Activated T-helper 1 cell treated with anti-CD3 and anti-CD28 coated beads, Interleukin-12 subunit alpha, Interleukin-12 subunit beta, Interleukin-2, Interleukin-4 antibody, amounts not matched to agents 30 ng/mL and 10 ng/mL and 1 ng/mL, durations not matched to agents 14 hours and 24 hours and 36 hours (primary cell): ENCODE measurements at regions of chr18 and their contacts with region 1.

Region 1: GRCh38 chr18:63161761-63162195 is 157.8 kb downstream of the BCL2 start:
- DNase-seq: peak; percentile 80
- H3K4me3 Mint-ChIP-seq: peak overlapping the region; percentile 83
- H3K27ac Mint-ChIP-seq: peak overlapping the region; percentile 99
- H3K4me1 Mint-ChIP-seq: peaks cover 92% of the 10 kb centered on the region
- H3K27me3 Mint-ChIP-seq: no peaks in the 10 kb centered on the region

Region 2: DNA sequence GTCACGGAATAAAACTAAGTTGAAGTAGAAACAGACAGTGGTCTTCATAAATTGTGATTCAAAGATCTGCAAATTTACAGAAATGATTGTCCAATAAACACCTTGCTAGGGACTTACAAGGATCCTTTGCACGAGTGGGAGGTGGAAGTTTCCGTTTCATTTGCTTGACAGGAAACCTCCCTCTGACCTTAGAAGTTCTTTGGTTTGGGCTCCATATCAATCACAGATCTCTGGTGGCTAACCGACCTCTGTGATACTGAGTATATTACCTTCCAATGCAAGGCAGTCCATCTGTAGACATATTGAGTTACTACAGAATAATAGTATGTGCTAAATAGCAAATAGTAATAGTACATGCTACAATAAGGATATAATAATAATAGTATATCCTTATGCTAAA is 1235.2 kb before region 1 on chr18:
- intact Hi-C with region 1: loop called (anchors 5 kb)
- DNase-seq: peak; percentile 26
- H3K4me3 Mint-ChIP-seq: peak overlapping the region; percentile 63
- H3K27ac Mint-ChIP-seq: peak overlapping the region; percentile 74
- H3K4me1 Mint-ChIP-seq: peaks cover 40% of the 10 kb centered on the region
- H3K27me3 Mint-ChIP-seq: peaks cover 12% of the 10 kb centered on the region

Region 3: GRCh38 chr18:63138436-63139340 is 23.1 kb before region 1 on chr18:
- intact Hi-C with region 1: loop called (anchors 1 kb)
- DNase-seq: no peak
- H3K4me3 Mint-ChIP-seq: peak overlapping the region; percentile 73
- H3K27ac Mint-ChIP-seq: peak overlapping the region; percentile 90
- H3K4me1 Mint-ChIP-seq: peaks cover 71% of the 10 kb centered on the region
- H3K27me3 Mint-ChIP-seq: no peaks in the 10 kb centered on the region

Region 4: DNA sequence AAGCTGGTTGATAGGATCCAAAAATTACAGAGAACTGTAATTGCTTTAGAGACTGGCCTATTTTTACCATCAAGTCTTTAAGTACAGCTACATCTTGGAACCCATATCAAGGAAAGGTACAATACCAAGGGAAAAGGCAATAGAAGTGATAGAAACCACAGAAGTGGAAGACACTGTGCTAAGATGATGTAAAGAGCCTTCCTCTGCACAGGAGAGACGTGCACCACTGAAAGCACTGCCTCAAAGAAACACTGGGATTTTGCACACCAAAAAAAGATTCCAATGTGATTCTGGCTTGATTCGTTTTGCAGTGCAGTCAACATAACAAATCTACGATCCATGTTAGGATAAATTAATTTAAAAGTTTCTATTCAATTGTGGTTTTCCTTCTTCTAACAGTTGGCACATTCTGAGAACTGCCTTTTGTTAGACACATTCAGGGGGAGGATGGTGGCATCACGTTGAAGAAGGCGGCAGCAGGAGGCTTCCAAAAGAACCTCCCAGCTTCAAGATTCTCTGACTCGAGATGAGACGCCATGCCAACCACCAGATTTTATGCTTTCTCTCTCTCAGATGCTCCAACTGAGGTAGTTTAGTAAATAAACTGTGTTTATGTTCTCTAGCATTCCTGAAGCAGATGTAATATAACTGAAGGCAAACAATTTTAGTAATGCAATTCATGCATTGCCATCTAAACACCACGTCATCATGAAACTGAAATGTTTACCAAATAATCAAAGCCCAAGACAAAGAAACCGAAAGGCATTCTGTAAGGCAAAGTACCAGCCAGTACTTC is 54.9 kb after region 1 on chr18:
- intact Hi-C with region 1: loop called (anchors 1 kb)
- DNase-seq: no peak
- H3K4me3 Mint-ChIP-seq: peak overlapping the region; percentile 67
- H3K27ac Mint-ChIP-seq: peak overlapping the region; percentile 89
- H3K4me1 Mint-ChIP-seq: peaks cover 94% of the 10 kb centered on the region
- H3K27me3 Mint-ChIP-seq: no peaks in the 10 kb centered on the region

Region 5: DNA sequence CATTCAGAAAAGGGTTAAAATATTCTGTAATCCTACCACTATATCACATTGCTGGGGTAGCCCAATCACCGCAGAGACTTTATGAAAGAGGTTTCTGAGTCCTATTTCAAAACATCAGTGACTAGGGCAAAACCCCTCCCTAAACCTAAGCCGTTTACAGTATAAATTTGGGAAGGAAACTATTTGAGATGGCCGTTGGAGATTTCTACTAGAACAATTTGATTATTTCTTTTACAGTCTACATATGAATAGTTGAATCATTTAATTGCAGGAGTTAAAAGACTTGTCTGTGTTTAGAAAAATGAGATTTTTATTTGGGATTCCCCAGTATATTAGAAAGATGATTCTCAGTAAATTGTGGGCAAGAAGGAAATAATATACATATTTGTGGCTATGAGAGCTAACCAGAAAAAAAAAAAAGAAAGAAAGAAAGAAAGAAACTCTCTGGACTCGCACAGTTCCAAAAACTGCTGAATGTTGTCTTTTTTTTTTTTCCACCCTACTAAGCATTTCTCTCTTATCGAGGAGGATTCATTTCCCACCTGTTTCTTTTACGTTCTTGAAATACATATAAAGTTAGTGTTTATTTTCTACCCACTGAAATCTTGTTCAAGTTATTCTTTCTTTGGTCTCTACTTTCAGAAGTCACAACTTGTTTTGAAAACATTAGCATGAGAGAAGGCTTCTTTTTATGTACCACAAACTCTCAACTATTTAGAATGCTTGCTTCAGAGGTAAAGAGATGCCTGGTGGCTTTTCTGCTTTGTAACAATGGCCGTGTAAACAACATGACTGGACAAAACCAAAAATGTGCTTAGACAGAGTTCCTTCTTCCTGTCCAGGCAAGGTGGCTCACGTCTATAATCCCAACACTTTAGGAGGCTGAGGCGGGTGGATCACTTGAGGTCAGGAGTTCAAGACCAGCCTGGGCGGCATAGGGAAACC is 91.9 kb after region 1 on chr18:
- intact Hi-C with region 1: loop called (anchors 1 kb)
- DNase-seq: no peak
- H3K4me3 Mint-ChIP-seq: no peak overlapping the region
- H3K27ac Mint-ChIP-seq: peak overlapping the region; percentile 79
- H3K4me1 Mint-ChIP-seq: peaks cover 78% of the 10 kb centered on the region
- H3K27me3 Mint-ChIP-seq: no peaks in the 10 kb centered on the region

Region 6: DNA sequence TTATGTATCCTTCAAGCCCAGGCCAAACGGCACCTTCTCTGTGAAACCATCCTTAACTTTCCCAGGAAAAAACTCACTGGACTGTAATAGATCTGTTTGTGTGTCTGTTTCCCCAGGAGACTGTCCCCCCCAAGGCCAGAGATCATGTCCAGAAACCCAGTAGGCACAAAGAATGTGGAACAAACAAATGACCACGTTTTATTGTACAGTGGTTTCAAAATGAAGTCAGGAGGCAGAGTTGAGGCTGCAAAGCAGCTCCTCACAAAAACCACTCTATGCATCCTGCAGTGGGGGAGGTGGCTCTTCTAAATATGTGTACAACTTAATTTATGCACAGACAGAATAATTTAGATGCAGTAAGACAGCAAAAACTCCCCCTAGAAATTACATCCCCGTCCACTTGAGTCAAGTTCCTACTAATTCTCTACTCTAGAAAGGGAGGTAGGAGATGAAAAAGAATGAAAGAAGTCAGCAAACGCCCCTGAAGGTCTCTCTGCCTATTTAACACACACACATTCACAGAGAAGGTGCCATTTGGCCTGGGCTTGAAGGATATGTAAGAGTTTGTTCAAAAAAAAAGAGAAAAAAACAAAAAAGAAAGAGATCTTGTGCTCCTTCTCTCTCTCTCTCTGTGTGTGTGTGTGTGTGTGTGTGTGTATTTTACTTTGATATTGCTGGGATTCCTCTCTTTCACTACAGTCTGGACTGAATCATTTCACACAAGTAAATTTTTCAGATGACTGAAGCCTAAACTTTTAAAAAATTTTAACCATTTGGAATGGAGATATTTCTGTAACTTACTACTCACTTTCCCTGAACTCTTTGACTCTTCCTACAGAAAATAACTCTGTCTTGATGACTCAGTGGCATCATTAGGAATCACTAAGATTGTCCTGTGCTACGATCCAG is 138.3 kb after region 1 on chr18:
- intact Hi-C with region 1: loop called (anchors 1 kb)
- DNase-seq: no peak
- H3K4me3 Mint-ChIP-seq: peak overlapping the region; percentile 76
- H3K27ac Mint-ChIP-seq: peak overlapping the region; percentile 96
- H3K4me1 Mint-ChIP-seq: peaks cover 91% of the 10 kb centered on the region
- H3K27me3 Mint-ChIP-seq: no peaks in the 10 kb centered on the region

Region 7: DNA sequence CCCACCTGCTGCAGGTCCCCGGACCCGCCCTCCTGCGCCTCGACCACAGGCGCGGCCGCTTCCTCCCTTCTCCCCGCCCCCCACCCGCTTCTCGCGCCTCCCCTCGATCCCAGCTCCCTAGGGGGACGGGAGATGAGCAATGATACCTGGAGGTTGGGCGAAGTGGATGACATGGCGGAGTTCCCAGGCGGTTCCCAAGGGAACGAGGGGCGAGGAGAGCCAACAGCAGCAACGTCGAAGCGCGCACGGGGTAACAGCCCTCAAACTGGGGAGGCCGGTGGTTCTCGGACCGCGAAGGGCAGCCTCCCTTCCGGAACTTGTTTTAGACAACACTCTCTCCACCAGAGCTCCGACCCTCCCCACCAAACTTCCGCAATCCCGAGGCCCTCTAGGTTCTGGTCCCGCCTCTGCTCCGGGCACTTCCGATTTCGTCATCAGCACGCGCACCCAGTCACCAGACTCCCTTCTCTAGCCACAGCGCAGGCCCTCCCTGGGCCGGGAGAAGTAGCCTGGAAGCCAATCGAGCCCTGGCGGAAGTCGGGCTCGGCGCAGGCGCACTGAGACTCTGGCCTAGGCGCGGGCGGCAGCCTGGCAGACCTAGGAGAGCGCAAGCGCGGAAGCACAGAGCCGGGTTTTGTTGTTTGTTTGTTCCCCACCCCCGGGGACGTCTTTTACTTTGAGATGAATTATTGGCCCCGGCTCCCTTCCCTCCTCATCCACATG is 260.5 kb after region 1 on chr18 and contains the start of gene VPS4B:
- intact Hi-C with region 1: loop called (anchors 1 kb)
- DNase-seq: peak; percentile 100
- H3K4me3 Mint-ChIP-seq: peak within 1 kb of the TSS; percentile 91
- H3K27ac Mint-ChIP-seq: peak within 1 kb of the TSS; percentile 92
- H3K4me1 Mint-ChIP-seq: peaks cover 18% of the 10 kb centered on the region
- H3K27me3 Mint-ChIP-seq: no peaks in the 10 kb centered on the region
- total RNA-seq, gene VPS4B: 58.6 and 60.7 TPM in 2 replicates